CD4-positive, alpha-beta T cell (primary cell): ENCODE measurements at regions of chr1 and their contacts with region 1.

Region 1: GRCh38 chr1:160006312-160006940 is 25.4 kb downstream of the PIGM start:
- DNase-seq: peak; percentile 59 to 87 (median 68)
- ATAC-seq: peak; percentile 93
- H3K4me3 ChIP-seq: no peak overlapping the region
- H3K4me3 Mint-ChIP-seq: no peak overlapping the region
- H3K27ac ChIP-seq: no peak overlapping the region
- H3K27ac Mint-ChIP-seq: no peak overlapping the region
- H3K4me1 ChIP-seq: no peaks in the 10 kb centered on the region
- H3K4me1 Mint-ChIP-seq: no peaks in the 10 kb centered on the region
- H3K27me3 ChIP-seq: peaks cover 3 to 4% of the 10 kb centered on the region in 2 experiments
- H3K27me3 Mint-ChIP-seq: peaks cover 9% of the 10 kb centered on the region
- CTCF ChIP-seq: peak; percentile 92

Region 2: GRCh38 chr1:159132271-159132881 is 874.0 kb before region 1 on chr1:
- CTCF ChIA-PET with region 1: no interaction called
- POLR2A ChIA-PET with region 1: no interaction called
- intact Hi-C with region 1: loop called in 1 of 2 experiments (anchors 2 kb)
- DNase-seq: peak; percentile 38 to 72 (median 54)
- ATAC-seq: no peak
- H3K4me3 ChIP-seq: no peak overlapping the region
- H3K4me3 Mint-ChIP-seq: no peak overlapping the region
- H3K27ac ChIP-seq: no peak overlapping the region
- H3K27ac Mint-ChIP-seq: no peak overlapping the region
- H3K4me1 ChIP-seq: no peaks in the 10 kb centered on the region
- H3K4me1 Mint-ChIP-seq: no peaks in the 10 kb centered on the region
- H3K27me3 ChIP-seq: peaks cover 4 to 14% of the 10 kb centered on the region in 2 experiments
- H3K27me3 Mint-ChIP-seq: peaks cover 13% of the 10 kb centered on the region
- CTCF ChIP-seq: peak; percentile 86

Region 3: GRCh38 chr1:159780583-159781582 is 225.5 kb before region 1 on chr1 and contains the start of gene DUSP23:
- CTCF ChIA-PET with region 1: interaction called, 15 read pairs
- POLR2A ChIA-PET with region 1: no interaction called
- intact Hi-C with region 1: loop called in 1 of 2 experiments (anchors 1 kb)
- DNase-seq: peak; percentile 90 to 98 (median 96)
- ATAC-seq: peak; percentile 95
- H3K4me3 ChIP-seq: peak within 1 kb of the TSS; percentile 66
- H3K4me3 Mint-ChIP-seq: peak within 1 kb of the TSS; percentile 92
- H3K27ac ChIP-seq: peak within 1 kb of the TSS; percentile 35 to 45
- H3K27ac Mint-ChIP-seq: peak within 1 kb of the TSS; percentile 73
- H3K4me1 ChIP-seq: peaks cover 20% of the 10 kb centered on the region
- H3K4me1 Mint-ChIP-seq: peaks cover 24% of the 10 kb centered on the region
- H3K27me3 ChIP-seq: no peaks in the 10 kb centered on the region
- H3K27me3 Mint-ChIP-seq: no peaks in the 10 kb centered on the region
- CTCF ChIP-seq: peak; percentile 83
- total RNA-seq, gene DUSP23: 3.9 to 6.0 TPM

Region 4: DNA sequence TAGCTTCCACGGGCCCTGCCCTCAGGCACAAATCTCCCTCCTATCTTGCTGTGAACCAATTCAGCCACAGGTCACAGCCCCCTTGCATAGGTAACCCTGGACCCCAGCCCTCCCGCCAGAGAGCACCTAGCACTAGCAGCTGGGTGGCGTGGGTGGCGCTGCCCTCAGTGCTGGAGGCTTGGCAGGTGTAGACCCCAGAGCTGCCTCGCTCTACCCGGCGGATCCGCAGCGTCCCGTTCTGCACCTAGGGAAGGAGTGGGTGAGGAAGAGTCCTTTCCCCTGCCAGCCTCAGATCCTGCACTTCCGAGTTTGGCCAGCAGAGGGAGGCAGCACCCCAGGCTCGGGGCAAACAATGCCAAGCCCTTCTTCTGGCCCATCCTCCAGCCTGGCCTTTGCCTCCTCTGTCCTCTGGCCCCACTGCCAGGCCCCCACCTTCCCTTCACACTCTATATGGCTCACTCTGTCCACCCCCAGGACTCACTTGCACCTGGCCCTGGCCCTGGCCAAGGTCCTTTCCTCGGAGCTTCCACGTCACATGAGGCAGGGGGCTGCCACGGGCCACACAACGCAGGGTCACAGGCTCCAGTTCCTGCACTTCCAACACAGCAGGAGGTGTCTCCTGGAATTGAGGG is 70.0 kb before region 1 on chr1:
- CTCF ChIA-PET with region 1: interaction called, 6 read pairs
- POLR2A ChIA-PET with region 1: no interaction called
- intact Hi-C with region 1: loop called (anchors 1 kb)
- DNase-seq: peak; percentile 68 to 91 (median 83)
- ATAC-seq: peak; percentile 90
- H3K4me3 ChIP-seq: no peak overlapping the region
- H3K4me3 Mint-ChIP-seq: no peak overlapping the region
- H3K27ac ChIP-seq: no peak overlapping the region
- H3K27ac Mint-ChIP-seq: no peak overlapping the region
- H3K4me1 ChIP-seq: peaks cover 21% of the 10 kb centered on the region
- H3K4me1 Mint-ChIP-seq: peaks cover 6% of the 10 kb centered on the region
- H3K27me3 ChIP-seq: no peaks in the 10 kb centered on the region
- H3K27me3 Mint-ChIP-seq: peaks cover 19% of the 10 kb centered on the region
- CTCF ChIP-seq: peak; percentile 98

Region 5: GRCh38 chr1:160018900-160019299 is 12.5 kb after region 1 on chr1:
- CTCF ChIA-PET with region 1: interaction called, 17 read pairs
- POLR2A ChIA-PET with region 1: no interaction called
- intact Hi-C with region 1: no loop called
- DNase-seq: no peak
- ATAC-seq: no peak
- H3K4me3 ChIP-seq: no peak overlapping the region
- H3K4me3 Mint-ChIP-seq: no peak overlapping the region
- H3K27ac ChIP-seq: no peak overlapping the region
- H3K27ac Mint-ChIP-seq: no peak overlapping the region
- H3K4me1 ChIP-seq: no peaks in the 10 kb centered on the region
- H3K4me1 Mint-ChIP-seq: no peaks in the 10 kb centered on the region
- H3K27me3 ChIP-seq: peaks cover 0 to 3% of the 10 kb centered on the region in 2 experiments
- H3K27me3 Mint-ChIP-seq: peaks cover 6% of the 10 kb centered on the region
- CTCF ChIP-seq: no peak

Region 6: DNA sequence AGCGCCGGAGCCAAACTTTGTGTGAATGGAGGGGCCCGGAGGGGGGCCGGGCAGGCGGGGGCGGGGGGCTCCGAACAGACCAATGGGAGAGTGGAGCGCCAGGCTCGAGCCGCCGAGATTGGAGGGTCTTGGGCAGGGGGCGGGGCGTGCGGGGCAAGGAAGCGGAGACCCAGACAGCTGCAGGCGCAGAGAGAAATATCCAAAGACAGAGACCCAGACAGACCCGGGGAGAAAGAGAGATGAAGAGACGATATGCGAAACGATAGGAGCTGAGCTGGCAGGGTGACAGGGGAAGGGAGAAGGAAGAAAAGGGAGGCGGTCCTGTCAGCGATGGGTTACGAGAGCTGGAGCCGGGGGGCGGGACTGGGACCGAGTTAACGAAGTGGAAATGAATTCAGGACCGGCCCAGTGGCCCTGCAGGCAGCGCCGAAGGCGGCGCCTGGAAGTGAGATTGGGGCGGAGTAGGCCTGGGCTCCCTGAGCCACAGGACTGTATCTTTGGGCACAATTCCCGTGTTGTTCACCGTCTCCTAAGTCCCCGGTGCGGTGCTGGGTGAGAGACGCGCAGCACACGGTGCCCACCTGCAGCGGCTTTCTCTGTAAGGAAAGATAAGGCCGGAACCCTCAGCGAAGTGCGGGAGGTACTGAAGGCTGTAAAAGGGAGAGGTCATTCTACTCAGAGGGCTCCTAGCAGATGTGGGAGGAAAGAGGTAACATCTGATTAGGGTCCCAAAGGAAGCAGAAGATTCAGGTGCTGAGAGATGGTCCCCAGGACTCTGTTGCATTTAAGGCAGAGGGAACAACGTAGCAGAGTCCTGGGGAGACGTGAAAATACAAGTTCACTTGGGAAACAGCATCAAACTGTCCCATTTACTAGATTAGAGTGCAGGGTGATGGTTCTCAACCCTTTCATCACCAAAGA is 64.1 kb after region 1 on chr1:
- CTCF ChIA-PET with region 1: no interaction called
- POLR2A ChIA-PET with region 1: no interaction called
- intact Hi-C with region 1: no loop called
- DNase-seq: peak; percentile 43 to 82 (median 70)
- ATAC-seq: peak; percentile 93
- H3K4me3 ChIP-seq: peak overlapping the region; percentile 59
- H3K4me3 Mint-ChIP-seq: peak overlapping the region; percentile 92
- H3K27ac ChIP-seq: no peak overlapping the region
- H3K27ac Mint-ChIP-seq: no peak overlapping the region
- H3K4me1 ChIP-seq: peaks cover 13% of the 10 kb centered on the region
- H3K4me1 Mint-ChIP-seq: peaks cover 8% of the 10 kb centered on the region
- H3K27me3 ChIP-seq: peaks cover 19 to 24% of the 10 kb centered on the region in 2 experiments
- H3K27me3 Mint-ChIP-seq: peaks cover 48% of the 10 kb centered on the region
- CTCF ChIP-seq: no peak

Region 7: DNA sequence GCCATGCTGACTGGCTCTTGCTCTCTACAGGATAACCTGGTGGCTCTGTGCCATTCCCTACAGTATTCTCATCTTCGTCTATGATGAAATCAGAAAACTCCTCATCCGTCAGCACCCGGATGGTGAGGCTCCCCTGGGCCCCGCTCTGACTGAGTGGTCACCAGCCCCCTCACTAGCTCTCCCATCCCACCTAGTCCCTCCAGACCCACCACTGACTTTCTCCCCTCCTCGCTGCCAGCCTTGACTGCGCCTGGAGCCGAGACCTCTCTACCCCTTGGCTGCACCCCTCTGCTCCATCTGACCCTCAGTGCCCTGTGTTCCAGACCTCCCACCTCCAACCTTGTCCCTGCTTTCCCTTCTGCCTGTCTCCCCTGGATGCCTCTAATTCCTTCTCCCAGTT is 179.8 kb after region 1 on chr1:
- CTCF ChIA-PET with region 1: no interaction called
- POLR2A ChIA-PET with region 1: no interaction called
- intact Hi-C with region 1: no loop called
- DNase-seq: no peak
- ATAC-seq: no peak
- H3K4me3 ChIP-seq: no peak overlapping the region
- H3K4me3 Mint-ChIP-seq: no peak overlapping the region
- H3K27ac ChIP-seq: no peak overlapping the region
- H3K27ac Mint-ChIP-seq: no peak overlapping the region
- H3K4me1 ChIP-seq: no peaks in the 10 kb centered on the region
- H3K4me1 Mint-ChIP-seq: no peaks in the 10 kb centered on the region
- H3K27me3 ChIP-seq: no peaks in the 10 kb centered on the region
- H3K27me3 Mint-ChIP-seq: peaks cover 10% of the 10 kb centered on the region
- CTCF ChIP-seq: no peak